ENCODE measurements at regions of chr12 and their contacts with region 1.

Region 1: GRCh38 chr12:53065975-53066931 is 12.9 kb downstream of the SPRYD3 start:
- H3K4me3 ChIP-seq: no peak overlapping the region
- H3K27ac ChIP-seq: no peak overlapping the region
- H3K4me1 ChIP-seq: peaks cover 4% of the 10 kb centered on the region
- CTCF ChIP-seq: peak; percentile 91

Region 2: GRCh38 chr12:53014709-53015108 is 51.5 kb before region 1 on chr12:
- CTCF ChIA-PET with region 1: no interaction called
- POLR2A ChIA-PET with region 1: no interaction called
- H3K4me3 ChIP-seq: no peak overlapping the region
- H3K27ac ChIP-seq: no peak overlapping the region
- H3K4me1 ChIP-seq: peaks cover 3% of the 10 kb centered on the region; the same call in 1 of the 2 replicates
- CTCF ChIP-seq: no peak

Region 3: DNA sequence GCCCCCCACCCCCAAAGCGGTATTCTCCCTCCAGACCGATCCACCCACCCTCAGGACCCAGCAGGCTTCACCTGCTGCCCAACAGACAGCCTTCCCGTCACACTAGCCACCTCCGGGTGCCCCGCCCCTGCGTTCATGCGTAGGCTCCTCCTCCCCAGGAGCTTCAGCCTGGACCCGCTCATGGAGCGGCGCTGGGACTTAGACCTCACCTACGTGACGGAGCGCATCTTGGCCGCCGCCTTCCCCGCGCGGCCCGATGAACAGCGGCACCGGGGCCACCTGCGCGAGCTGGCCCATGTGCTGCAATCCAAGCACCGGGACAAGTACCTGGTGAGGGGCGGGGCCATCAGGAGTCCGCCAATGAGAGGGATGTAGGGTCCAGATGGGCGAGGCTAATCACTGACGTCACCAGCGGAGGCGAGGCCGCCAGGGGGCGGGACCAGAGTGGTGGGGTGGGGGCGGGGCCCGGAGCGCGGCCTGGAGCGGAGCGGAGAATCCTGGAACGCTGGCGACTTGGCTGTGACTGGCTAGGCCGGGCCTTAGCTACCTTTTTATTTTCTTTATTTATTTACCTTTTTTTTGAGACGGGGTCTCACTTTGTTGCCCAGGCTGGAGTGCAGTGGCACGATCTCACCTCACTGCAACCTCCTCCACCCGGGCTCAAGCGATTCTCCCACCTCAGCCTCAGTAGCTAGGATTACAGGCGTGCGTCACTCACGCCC is 12.0 kb before region 1 on chr12:
- CTCF ChIA-PET with region 1: interaction called, 59 read pairs
- POLR2A ChIA-PET with region 1: interaction called, 4 read pairs
- H3K4me3 ChIP-seq: peak overlapping the region; percentile 73
- H3K27ac ChIP-seq: peak overlapping the region; percentile 45; the same call in 1 of the 2 replicates
- H3K4me1 ChIP-seq: peaks cover 24% of the 10 kb centered on the region
- CTCF ChIP-seq: no peak

Region 4: DNA sequence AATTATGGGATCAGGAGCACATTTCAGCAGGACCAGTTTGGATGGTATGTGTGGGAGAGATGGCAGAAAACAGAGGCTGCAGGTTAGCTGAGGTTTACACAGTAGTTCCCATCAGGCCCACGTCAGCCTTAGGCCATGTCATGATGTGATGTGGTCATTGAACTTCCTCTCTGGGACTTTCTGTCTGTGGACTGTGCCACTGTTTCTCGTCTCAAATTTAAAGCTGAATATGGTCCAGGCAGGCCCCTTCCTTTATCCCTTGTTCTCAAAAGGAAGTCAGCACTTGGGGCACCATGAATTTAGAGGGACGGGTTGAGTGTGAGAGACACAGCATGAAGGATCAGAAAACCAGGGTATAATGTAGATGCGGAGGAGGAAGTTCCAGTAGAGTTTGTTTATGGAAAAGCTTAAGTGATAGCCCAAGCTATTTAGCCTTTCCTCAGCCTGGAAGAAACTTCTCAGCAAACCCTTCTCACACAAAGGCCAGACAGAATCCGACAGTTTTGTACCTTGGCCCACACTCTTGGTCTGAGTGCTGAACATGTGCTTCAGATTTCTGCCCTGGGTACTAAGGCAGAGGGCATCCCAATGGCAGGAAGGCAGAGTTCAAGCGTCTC is 27.6 kb after region 1 on chr12:
- CTCF ChIA-PET with region 1: interaction called, 264 read pairs
- POLR2A ChIA-PET with region 1: interaction called, 17 read pairs
- H3K4me3 ChIP-seq: no peak overlapping the region
- H3K27ac ChIP-seq: no peak overlapping the region
- H3K4me1 ChIP-seq: peaks cover 3% of the 10 kb centered on the region; the same call in 1 of the 2 replicates
- CTCF ChIP-seq: no peak

Region 5: GRCh38 chr12:53159195-53159839 is 93.1 kb after region 1 on chr12:
- CTCF ChIA-PET with region 1: interaction called, 24 read pairs
- POLR2A ChIA-PET with region 1: no interaction called
- H3K4me3 ChIP-seq: no peak overlapping the region
- H3K27ac ChIP-seq: no peak overlapping the region
- H3K4me1 ChIP-seq: no peaks in the 10 kb centered on the region
- CTCF ChIP-seq: peak; percentile 99

Region 6: GRCh38 chr12:53267999-53268647 is 201.9 kb after region 1 on chr12 and contains the start of gene ESPL1:
- CTCF ChIA-PET with region 1: interaction called, 13 read pairs
- POLR2A ChIA-PET with region 1: no interaction called
- H3K4me3 ChIP-seq: peak within 1 kb of the TSS; percentile 74
- H3K27ac ChIP-seq: peak within 1 kb of the TSS; percentile 75; the same call in 1 of the 2 replicates
- H3K4me1 ChIP-seq: peaks cover 5% of the 10 kb centered on the region; the same call in 1 of the 2 replicates
- CTCF ChIP-seq: peak; percentile 73

Measured in HEK293 (cell line).